A549 (cell line): ENCODE measurements at regions of chr1 and their contacts with region 1.

Region 1: DNA sequence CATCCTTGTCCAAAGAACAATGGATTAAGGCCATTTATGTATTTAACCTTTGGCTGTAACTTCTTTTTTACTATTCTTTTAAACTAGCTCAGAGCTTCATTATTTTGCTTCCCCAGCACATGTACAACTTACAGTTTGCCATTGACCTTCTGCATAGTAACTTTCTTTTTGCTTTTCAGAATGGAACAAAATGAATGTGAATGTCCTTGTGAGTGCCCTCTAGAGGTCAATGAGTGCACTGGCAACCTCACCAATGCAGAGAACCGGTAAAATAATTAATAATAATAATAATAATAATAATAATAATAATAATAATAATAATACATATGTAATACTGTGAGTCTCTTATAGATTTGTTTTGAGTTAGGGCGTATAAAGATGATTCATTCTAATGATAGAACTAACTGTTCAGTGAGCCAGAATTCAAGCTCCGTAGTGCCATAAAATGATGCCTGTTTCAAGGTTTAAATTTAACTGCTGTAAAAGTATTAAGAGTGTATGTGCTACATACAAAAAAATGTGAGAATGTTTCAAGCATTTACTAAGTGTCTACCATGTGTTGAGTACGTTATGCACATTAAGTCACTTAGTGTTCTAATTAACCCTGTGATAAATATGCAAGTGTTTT is 69.0 kb upstream of the RAVER2 start:
- DNase-seq: peak; percentile 7 to 8
- ATAC-seq: no peak
- H3K4me3 ChIP-seq: no peak overlapping the region
- H3K27ac ChIP-seq: no peak overlapping the region
- H3K4me1 ChIP-seq: no peaks in the 10 kb centered on the region
- CTCF ChIP-seq: peak; percentile 61
- EP300 ChIP-seq: no peak
- POLR2A ChIP-seq: no peak
- RAD21 ChIP-seq: peak; percentile 32 to 46; a peak in 4 of 5 replicates

Region 2: GRCh38 chr1:64268653-64269557 is 406.9 kb before region 1 on chr1:
- CTCF ChIA-PET with region 1: interaction called, 56 read pairs
- POLR2A ChIA-PET with region 1: no interaction called
- DNase-seq: peak; percentile 27 to 83
- ATAC-seq: peak; percentile 84 to 89
- H3K4me3 ChIP-seq: peak overlapping the region; percentile 49
- H3K27ac ChIP-seq: peak overlapping the region in 1 of 2 experiments; percentile 59; a peak in 2 of 6 replicates
- H3K4me1 ChIP-seq: no peaks in the 10 kb centered on the region
- CTCF ChIP-seq: peak; percentile 76
- EP300 ChIP-seq: no peak
- POLR2A ChIP-seq: no peak
- RAD21 ChIP-seq: peak; percentile 90 to 93

Region 3: DNA sequence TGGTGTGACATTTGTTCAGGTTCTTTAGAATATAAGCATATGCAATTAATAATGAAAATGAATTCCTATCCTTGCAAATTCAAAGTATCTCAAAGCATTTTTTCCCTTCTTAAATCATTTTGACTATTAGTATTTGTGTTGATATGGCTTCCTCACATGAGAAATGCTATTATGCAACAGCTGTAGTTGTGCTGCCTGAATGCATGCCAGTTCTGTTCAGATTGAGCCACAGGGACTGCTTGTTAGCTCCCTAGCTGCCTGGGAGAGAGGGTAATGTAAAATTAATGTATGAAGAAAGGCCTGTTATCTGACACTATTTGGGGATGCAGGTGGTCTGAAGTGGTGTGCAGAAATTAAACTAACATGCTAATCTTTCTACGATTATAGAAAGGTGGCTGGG is 160.4 kb before region 1 on chr1:
- CTCF ChIA-PET with region 1: no interaction called
- POLR2A ChIA-PET with region 1: no interaction called
- DNase-seq: no peak
- ATAC-seq: no peak
- H3K4me3 ChIP-seq: no peak overlapping the region
- H3K27ac ChIP-seq: no peak overlapping the region
- H3K4me1 ChIP-seq: peaks cover 14% of the 10 kb centered on the region; the same call in 2 of the 3 replicates
- CTCF ChIP-seq: no peak
- EP300 ChIP-seq: no peak
- POLR2A ChIP-seq: no peak
- RAD21 ChIP-seq: no peak

Region 4: DNA sequence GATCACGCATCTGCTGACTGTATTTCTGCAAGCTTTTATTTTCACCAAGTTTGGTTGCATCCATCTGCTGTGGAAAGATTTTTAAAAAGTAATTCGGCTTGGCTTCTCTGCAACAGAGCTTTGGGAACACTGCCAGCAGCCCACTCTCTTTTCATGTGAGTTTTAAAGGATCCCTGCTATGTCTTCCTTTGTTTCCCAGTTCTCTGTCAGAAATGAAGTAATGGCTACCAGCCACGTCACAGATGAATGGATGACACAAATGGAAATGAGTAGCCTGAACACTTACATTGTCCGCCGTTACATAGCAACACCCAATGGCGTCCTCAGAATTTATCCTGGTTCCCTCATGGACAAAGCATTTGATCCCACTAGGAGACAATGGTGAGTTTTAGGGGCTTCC is 11.5 kb before region 1 on chr1:
- CTCF ChIA-PET with region 1: interaction called, 15 read pairs
- POLR2A ChIA-PET with region 1: no interaction called
- DNase-seq: no peak
- ATAC-seq: no peak
- H3K4me3 ChIP-seq: no peak overlapping the region
- H3K27ac ChIP-seq: no peak overlapping the region
- H3K4me1 ChIP-seq: no peaks in the 10 kb centered on the region
- CTCF ChIP-seq: no peak
- EP300 ChIP-seq: no peak
- POLR2A ChIP-seq: no peak
- RAD21 ChIP-seq: no peak

Region 5: GRCh38 chr1:64691626-64692025 is 15.8 kb after region 1 on chr1:
- CTCF ChIA-PET with region 1: interaction called, 11 read pairs
- POLR2A ChIA-PET with region 1: no interaction called
- DNase-seq: no peak
- ATAC-seq: no peak
- H3K4me3 ChIP-seq: no peak overlapping the region
- H3K27ac ChIP-seq: no peak overlapping the region
- H3K4me1 ChIP-seq: peaks cover 12% of the 10 kb centered on the region
- CTCF ChIP-seq: no peak
- EP300 ChIP-seq: no peak
- POLR2A ChIP-seq: no peak
- RAD21 ChIP-seq: no peak

Region 6: GRCh38 chr1:64811131-64811530 is 135.3 kb after region 1 on chr1:
- CTCF ChIA-PET with region 1: no interaction called
- POLR2A ChIA-PET with region 1: no interaction called
- DNase-seq: no peak
- ATAC-seq: no peak
- H3K4me3 ChIP-seq: no peak overlapping the region
- H3K27ac ChIP-seq: no peak overlapping the region
- H3K4me1 ChIP-seq: no peaks in the 10 kb centered on the region
- CTCF ChIP-seq: no peak
- EP300 ChIP-seq: no peak
- POLR2A ChIP-seq: no peak
- RAD21 ChIP-seq: no peak